ENCODE measurements at regions of chr18 and their contacts with region 1.

Region 1: DNA sequence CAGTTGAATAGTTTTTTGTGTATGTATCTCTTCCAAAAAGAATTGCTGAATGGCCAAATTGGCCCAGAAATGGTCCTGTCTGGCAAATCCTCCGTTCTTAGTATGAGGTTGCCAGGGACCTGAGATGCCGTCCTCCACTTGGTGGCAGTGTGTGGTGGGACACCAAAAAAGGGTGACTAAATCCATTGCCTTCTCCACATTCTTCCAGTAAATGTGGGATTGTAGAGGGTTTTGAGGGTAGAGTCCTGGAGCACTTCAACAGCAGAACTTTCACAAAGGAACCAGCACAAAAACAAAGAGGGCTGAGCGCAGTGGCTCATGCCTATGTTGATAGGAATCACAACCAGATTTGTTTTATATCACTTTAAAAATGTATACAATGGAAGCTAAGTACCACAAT is 199.9 kb downstream of the BCL2 start:
- DNase-seq: peak in 1 of 2 donors; percentile 41
- ATAC-seq: peak in 1 of 2 donors; percentile 64
- H3K4me3 ChIP-seq: no peak overlapping the region
- H3K27ac ChIP-seq: no peak overlapping the region
- H3K4me1 ChIP-seq: peaks cover 19 to 23% of the 10 kb centered on the region in 2 donors
- H3K27me3 ChIP-seq: no peaks in the 10 kb centered on the region
- CTCF ChIP-seq: peak in 3 of 5 experiments; percentile 32 to 66 (median 52)
- POLR2A ChIP-seq: no peak

Region 2: DNA sequence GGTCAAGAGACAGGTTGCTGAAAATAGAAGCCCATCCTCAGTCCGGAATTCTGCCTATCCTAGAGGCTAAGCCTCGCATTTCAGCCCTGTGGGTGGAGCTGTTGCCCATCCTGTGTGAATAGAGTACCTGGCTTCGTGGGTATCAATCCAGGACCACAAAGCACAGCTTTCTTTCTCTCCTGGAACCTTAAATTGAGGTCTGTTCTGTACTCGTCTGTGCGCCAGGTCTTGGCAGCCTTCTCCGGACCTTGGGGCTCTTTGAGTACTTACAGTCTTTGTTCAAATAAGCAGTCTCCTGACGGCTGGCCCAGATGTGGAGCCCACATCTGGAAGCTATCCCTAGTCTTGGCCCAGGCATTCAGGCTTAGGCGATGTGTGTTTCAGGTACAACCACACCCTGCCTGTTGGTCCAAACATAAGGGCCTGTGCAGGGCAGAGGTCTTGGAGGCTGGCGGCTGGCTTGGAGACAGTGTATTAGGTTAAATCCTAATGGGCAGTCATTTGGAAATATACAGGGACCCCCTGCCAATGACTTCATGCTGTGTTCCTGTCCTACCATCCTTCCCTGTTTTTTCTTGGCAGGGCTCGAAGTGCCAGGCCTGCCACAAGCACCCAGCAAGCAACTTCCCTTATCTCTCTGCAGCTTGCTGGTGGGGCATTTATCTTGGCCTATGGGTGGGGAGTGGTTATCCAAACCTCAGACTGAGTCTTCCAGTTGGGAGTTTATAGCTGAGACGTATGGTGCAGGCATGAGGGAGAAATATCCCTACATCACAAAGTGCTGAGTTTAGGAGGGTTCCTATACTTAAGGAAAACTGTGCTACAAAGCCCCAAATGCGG is 94.2 kb before region 1 on chr18:
- in situ Hi-C with region 1: no loop called
- intact Hi-C with region 1: loop called (anchors 10 kb)
- DNase-seq: no peak
- ATAC-seq: peak; percentile 51 to 52
- H3K4me3 ChIP-seq: no peak overlapping the region
- H3K27ac ChIP-seq: no peak overlapping the region
- H3K4me1 ChIP-seq: no peaks in the 10 kb centered on the region
- H3K27me3 ChIP-seq: no peaks in the 10 kb centered on the region
- CTCF ChIP-seq: peak in 3 of 5 experiments; percentile 13 to 51 (median 39)
- POLR2A ChIP-seq: no peak

Region 3: GRCh38 chr18:63155169-63155852 is 35.7 kb after region 1 on chr18:
- in situ Hi-C with region 1: no loop called
- intact Hi-C with region 1: loop called (anchors 1 kb)
- DNase-seq: peak; percentile 58 to 77
- ATAC-seq: peak; percentile 71 to 92
- H3K4me3 ChIP-seq: peak overlapping the region; percentile 15 to 42 (median 31)
- H3K27ac ChIP-seq: peak overlapping the region in 3 of 4 donors; percentile 60 to 82 (median 63)
- H3K4me1 ChIP-seq: peaks cover 27 to 34% of the 10 kb centered on the region in 2 donors
- H3K27me3 ChIP-seq: no peaks in the 10 kb centered on the region
- CTCF ChIP-seq: peak; percentile 76 to 85 (median 80)
- POLR2A ChIP-seq: no peak

Region 4: GRCh38 chr18:63365876-63366212 is 246.2 kb after region 1 on chr18:
- in situ Hi-C with region 1: no loop called
- intact Hi-C with region 1: no loop called
- DNase-seq: no peak
- ATAC-seq: no peak
- H3K4me3 ChIP-seq: peak overlapping the region; percentile 81 to 95 (median 90)
- H3K27ac ChIP-seq: peak overlapping the region; percentile 90 to 99 (median 97)
- H3K4me1 ChIP-seq: peaks cover 19 to 21% of the 10 kb centered on the region in 2 donors
- H3K27me3 ChIP-seq: no peaks in the 10 kb centered on the region
- CTCF ChIP-seq: no peak
- POLR2A ChIP-seq: no peak

Region 5: DNA sequence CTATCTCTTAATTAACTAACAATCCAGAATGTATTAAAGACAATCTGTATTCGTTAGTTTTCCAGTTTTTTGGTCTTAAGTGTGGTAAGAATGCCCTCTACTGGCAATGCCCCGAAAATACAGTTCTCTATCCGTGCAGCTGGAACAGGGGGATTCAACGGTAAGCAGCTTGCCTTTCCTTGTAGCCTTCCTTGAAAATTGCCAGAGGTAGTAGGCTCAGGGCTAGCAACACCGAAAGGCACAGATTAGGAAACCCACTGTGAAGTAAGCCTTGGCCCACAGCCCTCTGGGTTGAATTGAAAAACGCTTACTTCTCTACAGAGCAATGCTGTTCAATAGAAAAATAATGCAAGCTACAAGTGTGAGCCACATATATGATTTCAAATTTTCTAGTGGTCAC is 319.7 kb after region 1 on chr18:
- in situ Hi-C with region 1: loop called in 1 of 4 experiments (anchors 10 kb)
- intact Hi-C with region 1: loop called (anchors 5 kb)
- DNase-seq: peak; percentile 10 to 33
- ATAC-seq: peak; percentile 68 to 80
- H3K4me3 ChIP-seq: no peak overlapping the region
- H3K27ac ChIP-seq: no peak overlapping the region
- H3K4me1 ChIP-seq: peaks cover 3 to 5% of the 10 kb centered on the region in 2 donors
- H3K27me3 ChIP-seq: no peaks in the 10 kb centered on the region
- CTCF ChIP-seq: peak; percentile 64 to 77 (median 67)
- POLR2A ChIP-seq: no peak

Region 6: GRCh38 chr18:63444567-63444966 is 324.9 kb after region 1 on chr18:
- in situ Hi-C with region 1: loop called in 1 of 4 experiments (anchors 10 kb)
- intact Hi-C with region 1: loop called (anchors 5 kb)
- DNase-seq: peak; percentile 19 to 20
- ATAC-seq: peak; percentile 80 to 89
- H3K4me3 ChIP-seq: no peak overlapping the region
- H3K27ac ChIP-seq: peak overlapping the region in 2 of 4 donors; percentile 32 to 47
- H3K4me1 ChIP-seq: no peaks in the 10 kb centered on the region
- H3K27me3 ChIP-seq: no peaks in the 10 kb centered on the region
- CTCF ChIP-seq: no peak
- POLR2A ChIP-seq: no peak

Measured in gastrocnemius medialis (tissue), 4 donors.